Activated T-helper 1 cell treated with anti-CD3 and anti-CD28 coated beads, Interleukin-12 subunit alpha, Interleukin-12 subunit beta, Interleukin-2, Interleukin-4 antibody, amounts not matched to agents 30 ng/mL and 10 ng/mL and 1 ng/mL, durations not matched to agents 14 hours and 24 hours and 36 hours (primary cell): ENCODE measurements at regions of chr2 and their contacts with region 1.

Region 1: GRCh38 chr2:237744613-237745249 is 53.8 kb upstream of the RBM44 start:
- DNase-seq: peak; percentile 62
- H3K4me3 Mint-ChIP-seq: no peak overlapping the region
- H3K27ac Mint-ChIP-seq: peak overlapping the region; percentile 85
- H3K4me1 Mint-ChIP-seq: peaks cover 33% of the 10 kb centered on the region
- H3K27me3 Mint-ChIP-seq: no peaks in the 10 kb centered on the region

Region 2: GRCh38 chr2:237512774-237513466 is 231.8 kb before region 1 on chr2:
- intact Hi-C with region 1: loop called (anchors 1 kb)
- DNase-seq: peak; percentile 57
- H3K4me3 Mint-ChIP-seq: no peak overlapping the region
- H3K27ac Mint-ChIP-seq: no peak overlapping the region
- H3K4me1 Mint-ChIP-seq: no peaks in the 10 kb centered on the region
- H3K27me3 Mint-ChIP-seq: peaks cover 3% of the 10 kb centered on the region

Region 3: DNA sequence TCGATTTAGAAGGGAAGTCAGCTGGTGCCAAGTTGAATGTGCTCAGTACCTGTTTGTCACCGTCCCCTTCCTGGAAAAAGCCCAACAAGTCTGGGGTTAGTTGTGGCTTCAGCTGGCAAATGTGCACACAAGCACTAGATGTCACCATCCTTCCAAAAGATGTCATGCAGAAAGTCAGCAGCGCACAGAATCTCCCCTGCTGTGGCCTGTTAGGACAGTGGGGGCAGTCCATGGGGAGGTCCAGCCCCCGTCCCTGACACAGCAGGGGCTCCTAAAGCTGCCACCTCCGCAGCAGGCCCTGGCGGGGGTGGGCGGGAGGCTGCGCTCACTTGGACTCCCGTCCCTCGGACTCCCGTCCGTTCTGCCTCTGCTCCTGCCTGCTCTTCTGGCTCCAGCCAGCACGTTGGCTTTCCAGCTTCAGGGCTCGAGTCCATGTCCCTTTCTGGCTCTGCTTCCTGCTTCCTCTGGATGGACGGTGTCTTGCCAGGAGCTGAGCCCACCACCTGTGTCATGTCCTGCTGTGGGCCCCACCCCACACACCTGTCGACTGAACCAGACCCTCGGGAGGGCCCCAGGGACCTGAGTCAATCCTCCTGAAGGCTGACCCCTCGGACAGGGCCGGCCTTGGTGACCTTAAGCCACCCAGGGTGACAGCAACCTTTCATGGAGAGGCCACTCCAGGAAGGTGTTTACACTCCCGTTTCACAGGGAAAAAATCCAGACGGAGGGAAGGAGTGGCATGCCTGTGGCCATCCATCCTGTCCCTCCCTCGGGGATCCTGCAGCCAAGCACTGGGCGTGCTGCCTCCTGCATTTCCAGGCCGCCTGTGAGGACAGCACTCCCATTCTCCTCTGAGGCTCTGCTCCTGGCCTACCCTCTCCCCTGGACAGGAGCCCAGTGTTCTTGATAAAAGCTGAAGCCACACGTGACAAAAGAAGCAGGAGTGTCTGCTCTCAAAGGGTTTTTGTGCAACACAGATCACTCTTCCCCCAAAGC is 162.7 kb before region 1 on chr2:
- intact Hi-C with region 1: loop called (anchors 1 kb)
- DNase-seq: no peak
- H3K4me3 Mint-ChIP-seq: no peak overlapping the region
- H3K27ac Mint-ChIP-seq: no peak overlapping the region
- H3K4me1 Mint-ChIP-seq: no peaks in the 10 kb centered on the region
- H3K27me3 Mint-ChIP-seq: peaks cover 4% of the 10 kb centered on the region

Region 4: DNA sequence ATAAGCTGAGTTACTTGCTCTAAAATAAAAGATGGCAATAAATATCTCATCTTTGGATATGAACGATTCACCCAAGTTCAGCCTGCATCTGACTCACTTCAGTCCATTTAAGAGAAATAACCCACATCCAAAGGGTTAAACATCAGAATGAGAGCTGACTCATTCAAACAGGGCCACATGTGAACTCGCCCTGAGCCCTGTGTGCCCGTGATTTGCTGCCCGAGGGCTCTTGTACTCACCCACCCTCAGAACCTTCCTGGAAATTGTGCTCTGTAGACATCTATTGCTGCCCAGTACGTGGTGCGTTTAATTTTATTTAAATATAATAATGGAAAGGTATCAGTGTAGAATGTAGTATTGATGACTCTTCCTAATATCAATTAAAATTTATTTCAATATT is 13.1 kb before region 1 on chr2:
- intact Hi-C with region 1: loop called (anchors 1 kb)
- DNase-seq: no peak
- H3K4me3 Mint-ChIP-seq: peak overlapping the region; percentile 40
- H3K27ac Mint-ChIP-seq: peak overlapping the region; percentile 85
- H3K4me1 Mint-ChIP-seq: peaks cover 46% of the 10 kb centered on the region
- H3K27me3 Mint-ChIP-seq: no peaks in the 10 kb centered on the region

Region 5: DNA sequence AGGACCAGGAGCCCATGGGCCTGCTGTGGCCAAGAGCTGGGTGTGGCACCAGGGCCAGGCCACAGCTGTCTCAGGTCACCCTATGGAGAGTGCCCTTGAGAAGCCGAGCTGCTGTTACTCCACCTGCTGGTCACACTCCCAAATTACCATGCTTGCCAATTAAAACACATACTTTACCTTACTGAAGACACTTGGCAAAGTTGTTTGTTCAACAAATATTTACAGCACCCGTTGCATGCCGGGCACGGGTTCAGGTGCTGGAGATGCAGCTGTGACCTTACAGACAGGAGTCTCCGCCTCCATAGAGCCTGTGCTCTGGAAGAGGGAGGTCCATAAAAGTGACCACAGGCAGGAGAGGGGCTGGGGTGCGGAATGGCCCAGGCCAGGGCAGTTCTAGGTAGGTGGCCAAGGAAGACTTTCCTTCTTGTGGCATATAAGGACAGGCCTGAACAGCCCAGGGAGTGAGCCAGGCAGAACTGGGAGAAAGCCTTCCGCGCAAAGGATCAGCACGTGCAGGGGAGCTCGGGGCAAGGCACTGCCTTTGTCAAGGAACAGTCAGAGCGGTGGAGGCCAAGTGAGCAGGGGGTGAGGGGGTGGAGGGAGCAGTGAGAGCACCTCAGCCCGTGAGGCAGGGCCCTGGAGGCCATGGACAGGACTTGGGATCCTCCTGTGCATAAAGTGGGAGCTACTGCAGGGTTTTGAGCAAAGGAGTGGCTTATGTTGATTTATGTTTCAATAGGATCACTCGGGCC is 30.2 kb after region 1 on chr2:
- intact Hi-C with region 1: no loop called
- DNase-seq: peak; percentile 24
- H3K4me3 Mint-ChIP-seq: no peak overlapping the region
- H3K27ac Mint-ChIP-seq: no peak overlapping the region
- H3K4me1 Mint-ChIP-seq: no peaks in the 10 kb centered on the region
- H3K27me3 Mint-ChIP-seq: no peaks in the 10 kb centered on the region